Vagina (tissue), 2 donors: ENCODE measurements at regions of chr18 and their contacts with region 1.

Region 1: DNA sequence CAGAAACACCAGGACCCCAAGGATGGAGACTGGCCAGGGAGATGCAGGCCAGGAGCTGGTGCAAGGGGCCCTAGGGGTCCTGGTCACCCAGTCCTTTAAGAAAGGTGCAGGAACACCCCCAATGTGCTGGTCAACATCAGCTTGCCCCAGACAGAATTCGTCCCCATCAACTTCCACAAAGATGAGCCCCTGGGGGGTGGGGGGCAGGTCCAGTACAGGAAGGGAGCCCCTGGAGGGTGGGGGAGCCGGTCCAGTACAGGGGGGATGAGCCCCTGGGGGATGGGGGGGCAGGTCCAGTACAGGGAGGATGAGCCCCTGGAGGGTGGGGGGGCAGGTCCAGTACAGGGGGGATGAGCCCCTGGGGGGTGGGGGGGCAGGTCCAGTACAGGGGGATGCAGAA is 160.7 kb upstream of the SALL3 start:
- DNase-seq: no peak
- H3K4me3 ChIP-seq: no peak overlapping the region
- H3K27ac ChIP-seq: no peak overlapping the region
- H3K4me1 ChIP-seq: peaks cover 7% of the 10 kb centered on the region
- H3K27me3 ChIP-seq: no peaks in the 10 kb centered on the region
- CTCF ChIP-seq: no peak
- POLR2A ChIP-seq: no peak

Region 2: DNA sequence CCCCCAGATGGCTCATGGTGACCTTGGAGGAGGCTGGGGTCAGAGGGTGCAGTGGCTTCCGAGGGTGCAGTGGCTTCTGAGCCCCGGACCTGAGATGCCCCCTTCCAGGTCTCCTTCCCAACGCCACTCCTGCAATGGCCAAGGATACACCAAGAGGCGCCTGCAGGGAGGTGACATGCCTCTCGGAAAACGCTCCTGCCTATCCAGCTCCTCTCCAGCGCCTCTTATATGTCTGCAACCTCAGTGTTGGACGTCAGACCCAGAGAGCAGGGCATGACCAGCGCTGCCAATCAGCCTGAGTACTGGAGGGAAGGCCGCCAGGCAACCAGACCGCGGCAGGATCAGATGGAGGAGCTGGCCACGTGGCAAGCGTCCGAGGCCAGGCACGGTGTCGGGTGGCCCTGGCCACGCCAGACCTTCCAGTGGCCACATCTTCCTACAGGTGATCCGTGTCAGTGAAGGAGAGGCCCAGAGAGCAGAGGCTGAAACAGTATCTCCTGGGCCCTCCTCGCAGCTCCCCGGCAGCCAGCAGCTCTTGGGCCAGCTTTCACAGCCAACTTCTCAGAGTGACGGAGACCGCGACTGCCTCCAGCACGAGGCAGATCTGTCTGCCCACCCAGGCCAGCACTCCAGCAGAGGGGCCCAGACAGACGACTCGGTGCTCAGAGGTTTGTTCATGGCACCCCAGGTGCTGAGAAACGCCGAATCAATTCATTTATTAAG is 38.8 kb before region 1 on chr18:
- intact Hi-C with region 1: loop called (anchors 2 kb)
- DNase-seq: no peak
- H3K4me3 ChIP-seq: no peak overlapping the region
- H3K27ac ChIP-seq: no peak overlapping the region
- H3K4me1 ChIP-seq: no peaks in the 10 kb centered on the region
- H3K27me3 ChIP-seq: no peaks in the 10 kb centered on the region
- CTCF ChIP-seq: no peak
- POLR2A ChIP-seq: no peak